ENCODE measurements at regions of chr3 and their contacts with region 1.

Region 1: GRCh38 chr3:160225176-160226025 is at the start of gene C3orf80:
- DNase-seq: peak; percentile 52
- ATAC-seq: peak; percentile 85
- H3K4me3 ChIP-seq: peak within 1 kb of the TSS; percentile 74
- H3K27ac ChIP-seq: no peak within 1 kb of the TSS
- H3K4me1 ChIP-seq: peaks cover 5% of the 10 kb centered on the region; the same call in 1 of the 2 replicates
- H3K27me3 ChIP-seq: peaks cover 21% of the 10 kb centered on the region
- CTCF ChIP-seq: peak; percentile 37; the same call in 1 of the 2 replicates
- total RNA-seq, gene C3orf80: 0.33 and 0.46 TPM in 2 replicates

Region 2: DNA sequence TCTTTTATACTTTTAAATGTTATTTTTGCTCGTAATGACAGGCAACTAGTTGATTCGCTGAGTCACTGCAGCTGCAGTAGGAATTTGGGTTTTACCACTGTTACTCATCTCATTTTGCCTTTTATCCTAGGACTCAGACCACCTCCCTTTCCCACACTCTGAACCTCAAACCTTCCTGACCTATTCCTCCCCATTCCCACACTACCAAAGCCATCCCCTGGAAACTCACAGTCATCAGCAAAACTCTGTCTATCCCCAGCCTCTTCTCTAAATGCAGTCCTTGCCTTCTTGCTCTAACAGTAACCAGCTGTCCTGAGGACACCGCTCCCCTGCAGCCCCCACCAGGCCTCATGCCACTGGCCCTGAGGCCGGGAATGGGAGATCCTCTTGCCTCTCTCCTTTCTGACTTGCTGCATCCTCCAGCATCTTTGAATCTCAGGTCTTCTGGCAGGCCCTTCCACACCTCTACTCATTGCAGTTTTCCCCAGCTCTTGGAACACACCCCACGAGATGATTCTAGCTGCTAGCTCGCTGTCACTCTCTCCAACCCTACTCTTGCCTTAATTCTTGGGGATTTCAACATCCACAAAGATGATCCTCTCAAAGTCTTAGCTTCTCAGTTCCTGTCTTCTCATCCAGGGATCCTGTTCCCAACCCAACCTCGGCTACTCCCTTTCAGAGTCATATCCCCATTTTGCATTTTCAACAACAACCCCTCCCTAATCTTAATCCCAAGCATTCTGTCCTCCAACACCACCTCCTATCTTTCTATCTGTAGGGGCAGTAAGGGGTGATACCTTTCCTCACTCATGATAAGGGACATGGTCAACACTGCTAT is 56.0 kb before region 1 on chr3:
- CTCF ChIA-PET with region 1: no interaction called
- POLR2A ChIA-PET with region 1: no interaction called
- intact Hi-C with region 1: loop called (anchors 5 kb)
- DNase-seq: peak; percentile 68
- ATAC-seq: peak; percentile 87
- H3K4me3 ChIP-seq: no peak overlapping the region
- H3K27ac ChIP-seq: peak overlapping the region; percentile 51
- H3K4me1 ChIP-seq: peaks cover 14% of the 10 kb centered on the region
- H3K27me3 ChIP-seq: no peaks in the 10 kb centered on the region
- CTCF ChIP-seq: no peak

Region 3: GRCh38 chr3:160210799-160211221 is 14.6 kb before region 1 on chr3:
- CTCF ChIA-PET with region 1: no interaction called
- POLR2A ChIA-PET with region 1: no interaction called
- intact Hi-C with region 1: no loop called
- DNase-seq: peak; percentile 54
- ATAC-seq: peak; percentile 49
- H3K4me3 ChIP-seq: no peak overlapping the region
- H3K27ac ChIP-seq: no peak overlapping the region
- H3K4me1 ChIP-seq: no peaks in the 10 kb centered on the region
- H3K27me3 ChIP-seq: peaks cover 15% of the 10 kb centered on the region; the same call in 1 of the 2 replicates
- CTCF ChIP-seq: peak; percentile 57

Region 4: DNA sequence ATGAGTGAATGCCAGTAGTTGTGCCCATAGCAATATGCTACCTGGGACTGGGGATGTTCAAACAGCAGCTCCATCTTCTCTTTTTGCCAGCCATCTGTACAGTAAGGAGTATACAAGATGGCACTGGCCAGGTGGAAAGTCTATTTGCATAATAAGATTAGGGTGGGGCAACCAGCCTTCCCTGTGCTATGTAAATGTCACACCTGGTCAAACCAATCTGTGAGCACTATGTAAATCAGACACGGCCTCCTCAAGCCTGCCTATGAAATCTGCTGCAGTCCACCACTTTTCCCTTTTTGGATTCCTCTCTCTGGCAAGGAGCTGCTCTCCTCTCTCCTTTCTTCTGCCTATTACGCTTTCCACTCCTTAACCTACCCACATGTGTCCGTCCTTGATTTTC is 52.8 kb after region 1 on chr3:
- CTCF ChIA-PET with region 1: no interaction called
- POLR2A ChIA-PET with region 1: no interaction called
- intact Hi-C with region 1: no loop called
- DNase-seq: no peak
- ATAC-seq: no peak
- H3K4me3 ChIP-seq: no peak overlapping the region
- H3K27ac ChIP-seq: no peak overlapping the region
- H3K4me1 ChIP-seq: no peaks in the 10 kb centered on the region
- H3K27me3 ChIP-seq: no peaks in the 10 kb centered on the region
- CTCF ChIP-seq: no peak

Region 5: GRCh38 chr3:160343132-160343531 is 117.7 kb after region 1 on chr3:
- CTCF ChIA-PET with region 1: no interaction called
- POLR2A ChIA-PET with region 1: no interaction called
- intact Hi-C with region 1: loop called (anchors 5 kb)
- DNase-seq: peak; percentile 42
- ATAC-seq: no peak
- H3K4me3 ChIP-seq: no peak overlapping the region
- H3K27ac ChIP-seq: no peak overlapping the region
- H3K4me1 ChIP-seq: no peaks in the 10 kb centered on the region
- H3K27me3 ChIP-seq: no peaks in the 10 kb centered on the region
- CTCF ChIP-seq: peak; percentile 60

Region 6: DNA sequence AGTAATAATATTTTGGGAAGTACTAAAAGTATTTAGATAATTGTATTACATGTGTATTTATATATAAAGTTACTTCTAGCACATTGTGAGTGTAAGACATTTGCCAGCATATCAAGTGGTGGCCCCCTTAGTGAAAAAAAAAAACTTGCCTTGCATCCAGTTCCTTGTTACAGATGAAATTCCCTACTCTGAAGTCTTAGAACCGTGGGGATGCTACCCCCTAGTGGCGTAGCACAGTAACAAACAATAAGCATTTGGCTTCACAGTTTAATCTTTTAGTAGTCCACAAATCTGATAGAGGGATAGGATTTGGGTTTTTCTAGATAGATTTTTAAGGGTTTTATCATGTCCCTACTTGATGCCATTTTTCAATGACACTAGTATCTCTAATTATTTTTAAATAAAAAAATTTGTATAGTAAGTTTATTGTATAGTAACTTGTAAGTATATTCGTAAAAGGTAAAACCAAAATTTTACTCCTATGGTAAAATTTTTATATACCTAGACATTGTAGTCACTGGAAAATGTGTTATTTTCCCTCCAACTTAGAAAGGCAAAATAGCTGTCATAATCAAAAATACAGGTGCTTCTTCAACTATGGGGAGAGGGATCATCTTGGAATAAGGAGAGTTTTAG is 188.3 kb after region 1 on chr3:
- CTCF ChIA-PET with region 1: no interaction called
- POLR2A ChIA-PET with region 1: no interaction called
- intact Hi-C with region 1: loop called (anchors 10 kb)
- DNase-seq: peak; percentile 83
- ATAC-seq: peak; percentile 80
- H3K4me3 ChIP-seq: no peak overlapping the region
- H3K27ac ChIP-seq: no peak overlapping the region
- H3K4me1 ChIP-seq: no peaks in the 10 kb centered on the region
- H3K27me3 ChIP-seq: no peaks in the 10 kb centered on the region
- CTCF ChIP-seq: peak; percentile 89

Measured in PC-3 (cell line).